PC-9 (cell line): ENCODE measurements at regions of chr4 and their contacts with region 1.

Region 1: GRCh38 chr4:135538698-135539097 is 1337.1 kb upstream of the PABPC4L start:
- DNase-seq: no peak
- H3K4me3 ChIP-seq: no peak overlapping the region
- H3K27ac ChIP-seq: no peak overlapping the region
- H3K4me1 ChIP-seq: no peaks in the 10 kb centered on the region
- H3K27me3 ChIP-seq: no peaks in the 10 kb centered on the region
- CTCF ChIP-seq: no peak

Region 2: GRCh38 chr4:135508005-135508714 is 30.5 kb before region 1 on chr4:
- CTCF ChIA-PET with region 1: no interaction called
- POLR2A ChIA-PET with region 1: no interaction called
- intact Hi-C with region 1: no loop called
- DNase-seq: peak; percentile 1 to 50
- H3K4me3 ChIP-seq: no peak overlapping the region
- H3K27ac ChIP-seq: no peak overlapping the region
- H3K4me1 ChIP-seq: no peaks in the 10 kb centered on the region
- H3K27me3 ChIP-seq: no peaks in the 10 kb centered on the region
- CTCF ChIP-seq: no peak

Region 3: GRCh38 chr4:135670548-135670947 is 131.8 kb after region 1 on chr4:
- CTCF ChIA-PET with region 1: interaction called, 10 read pairs
- POLR2A ChIA-PET with region 1: no interaction called
- intact Hi-C with region 1: no loop called
- DNase-seq: no peak
- H3K4me3 ChIP-seq: no peak overlapping the region
- H3K27ac ChIP-seq: no peak overlapping the region
- H3K4me1 ChIP-seq: no peaks in the 10 kb centered on the region
- H3K27me3 ChIP-seq: no peaks in the 10 kb centered on the region
- CTCF ChIP-seq: no peak